SK-N-SH (cell line): ENCODE measurements at regions of chr14 and their contacts with region 1.

Region 1: DNA sequence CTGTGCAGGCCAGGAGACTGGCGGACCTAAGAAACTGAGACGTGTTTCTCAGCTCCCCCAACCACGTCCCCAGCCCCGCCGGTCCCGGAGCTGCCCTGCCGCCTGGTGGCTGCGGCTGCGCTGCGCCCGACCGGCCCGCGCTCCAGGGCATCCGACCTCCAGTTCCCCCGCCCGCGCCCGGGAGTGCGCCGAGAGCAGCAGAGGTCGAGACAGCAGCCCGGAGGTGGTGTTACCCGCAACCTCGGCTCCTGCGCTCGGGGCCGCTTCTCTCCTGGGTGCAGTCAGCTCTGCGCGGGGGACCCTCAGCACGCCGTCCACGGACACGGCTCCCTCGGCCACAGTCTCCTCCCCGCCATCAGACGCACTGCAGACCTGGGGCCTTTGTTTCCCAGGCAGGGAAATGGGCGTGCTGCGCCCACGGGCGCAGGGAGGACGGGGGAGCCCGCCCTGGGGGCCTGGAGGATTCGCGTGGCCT is 21.6 kb upstream of the GPR132 start:
- DNase-seq: peak; percentile 90
- H3K4me3 ChIP-seq: peak overlapping the region; percentile 37 to 38; a peak in 3 of 4 replicates
- H3K27ac ChIP-seq: no peak overlapping the region
- H3K4me1 ChIP-seq: peaks cover 1 to 29% of the 10 kb centered on the region in 2 experiments; a peak in 2 of 4 replicates
- H3K27me3 ChIP-seq: no peaks in the 10 kb centered on the region
- CTCF ChIP-seq: peak; percentile 69
- EP300 ChIP-seq: no peak
- RAD21 ChIP-seq: peak; percentile 58

Region 2: GRCh38 chr14:104749111-104749649 is 337.7 kb before region 1 on chr14:
- CTCF ChIA-PET with region 1: no interaction called
- POLR2A ChIA-PET with region 1: no interaction called
- DNase-seq: no peak
- H3K4me3 ChIP-seq: no peak overlapping the region
- H3K27ac ChIP-seq: no peak overlapping the region
- H3K4me1 ChIP-seq: peaks cover 1 to 9% of the 10 kb centered on the region in 2 experiments; a peak in 2 of 4 replicates
- H3K27me3 ChIP-seq: no peaks in the 10 kb centered on the region
- CTCF ChIP-seq: no peak
- EP300 ChIP-seq: no peak
- RAD21 ChIP-seq: no peak

Region 3: DNA sequence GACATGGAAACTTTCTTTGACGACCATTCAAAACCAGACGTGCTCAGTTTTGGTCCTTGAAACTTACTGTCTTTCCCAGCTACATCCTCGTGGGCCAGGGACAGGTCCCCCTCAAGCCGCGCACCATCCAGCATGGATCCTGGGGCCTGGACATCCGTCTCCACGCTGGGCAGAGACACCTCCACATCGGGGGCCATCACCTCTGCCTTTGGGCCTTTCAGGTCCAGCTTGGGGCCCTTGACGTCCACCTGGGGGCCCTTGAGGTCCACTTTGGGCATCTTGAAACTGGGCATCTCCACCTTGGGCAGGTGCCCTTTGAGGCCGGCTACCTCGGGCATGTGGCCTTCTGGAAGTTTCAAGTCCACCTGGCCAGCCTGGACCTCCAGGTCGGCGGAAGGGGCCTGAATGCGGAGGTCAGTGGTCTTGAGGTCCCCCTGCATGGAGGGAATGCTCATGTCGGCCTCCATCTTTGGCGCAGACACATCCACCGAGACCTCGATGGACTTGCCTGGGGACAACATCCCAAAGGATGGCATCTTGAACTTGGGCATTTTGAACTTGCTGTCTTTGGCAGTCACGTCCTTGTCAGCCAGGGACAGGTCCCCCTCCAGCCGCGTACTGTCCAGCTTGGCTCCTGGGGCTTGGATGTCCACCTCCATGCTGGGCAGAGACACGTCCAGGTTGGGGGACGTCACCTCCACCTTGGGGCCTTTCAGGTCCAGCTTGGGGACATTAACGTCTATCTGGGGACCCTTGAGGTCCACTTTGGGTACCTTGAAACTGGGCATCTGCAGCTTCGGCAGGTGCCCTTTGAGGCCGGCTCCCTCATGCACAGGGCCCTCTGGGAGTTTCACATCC is 145.1 kb before region 1 on chr14:
- CTCF ChIA-PET with region 1: no interaction called
- POLR2A ChIA-PET with region 1: no interaction called
- DNase-seq: no peak
- H3K4me3 ChIP-seq: no peak overlapping the region
- H3K27ac ChIP-seq: no peak overlapping the region
- H3K4me1 ChIP-seq: no peaks in the 10 kb centered on the region
- H3K27me3 ChIP-seq: no peaks in the 10 kb centered on the region
- CTCF ChIP-seq: no peak
- EP300 ChIP-seq: no peak
- RAD21 ChIP-seq: no peak

Region 4: GRCh38 chr14:105065280-105066228 is 21.3 kb before region 1 on chr14 and contains the start of gene GPR132:
- CTCF ChIA-PET with region 1: interaction called, 36 read pairs
- POLR2A ChIA-PET with region 1: no interaction called
- DNase-seq: no peak
- H3K4me3 ChIP-seq: no peak within 1 kb of the TSS
- H3K27ac ChIP-seq: no peak within 1 kb of the TSS
- H3K4me1 ChIP-seq: no peaks in the 10 kb centered on the region; a peak in 1 of 4 replicates
- H3K27me3 ChIP-seq: no peaks in the 10 kb centered on the region
- CTCF ChIP-seq: no peak
- EP300 ChIP-seq: no peak
- RAD21 ChIP-seq: no peak
- polyA plus RNA-seq, gene GPR132: 0.03 TPM in 1 of 2 replicates, not detected in the other

Region 5: GRCh38 chr14:105075379-105076295 is 11.2 kb before region 1 on chr14:
- CTCF ChIA-PET with region 1: interaction called, 36 read pairs
- POLR2A ChIA-PET with region 1: no interaction called
- DNase-seq: peak; percentile 73
- H3K4me3 ChIP-seq: no peak overlapping the region
- H3K27ac ChIP-seq: no peak overlapping the region
- H3K4me1 ChIP-seq: peaks cover 0 to 8% of the 10 kb centered on the region in 2 experiments; a peak in 1 of 4 replicates
- H3K27me3 ChIP-seq: no peaks in the 10 kb centered on the region
- CTCF ChIP-seq: no peak
- EP300 ChIP-seq: no peak
- RAD21 ChIP-seq: no peak

Region 6: DNA sequence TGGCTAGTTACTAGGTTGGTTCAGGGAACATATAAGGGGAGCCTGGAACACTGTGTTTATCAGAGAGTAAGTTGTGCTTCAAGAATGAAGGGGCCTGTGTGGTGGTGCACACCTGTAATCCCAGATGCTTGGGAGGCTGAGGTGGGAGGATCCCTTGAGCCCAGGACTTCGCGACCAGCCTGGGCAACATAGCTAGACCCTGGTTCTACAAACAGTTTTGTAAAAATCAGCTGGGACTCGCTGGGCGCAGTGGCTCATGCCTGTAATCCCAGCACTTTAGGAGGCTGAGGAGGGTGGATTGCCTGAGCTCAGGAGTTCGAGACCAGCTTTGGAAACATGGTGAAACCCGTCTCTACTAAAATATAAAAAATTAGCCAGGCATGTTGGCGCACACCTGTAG is 20.5 kb after region 1 on chr14:
- CTCF ChIA-PET with region 1: interaction called, 14 read pairs
- POLR2A ChIA-PET with region 1: no interaction called
- DNase-seq: no peak
- H3K4me3 ChIP-seq: no peak overlapping the region
- H3K27ac ChIP-seq: no peak overlapping the region
- H3K4me1 ChIP-seq: no peaks in the 10 kb centered on the region
- H3K27me3 ChIP-seq: peaks cover 23% of the 10 kb centered on the region
- CTCF ChIP-seq: no peak
- EP300 ChIP-seq: no peak
- RAD21 ChIP-seq: no peak

Region 7: GRCh38 chr14:105135700-105136395 is 49.0 kb after region 1 on chr14:
- CTCF ChIA-PET with region 1: no interaction called
- POLR2A ChIA-PET with region 1: no interaction called
- DNase-seq: no peak
- H3K4me3 ChIP-seq: no peak overlapping the region
- H3K27ac ChIP-seq: no peak overlapping the region
- H3K4me1 ChIP-seq: no peaks in the 10 kb centered on the region
- H3K27me3 ChIP-seq: no peaks in the 10 kb centered on the region
- CTCF ChIP-seq: no peak
- EP300 ChIP-seq: no peak
- RAD21 ChIP-seq: no peak

Region 8: GRCh38 chr14:105203057-105203531 is 116.2 kb after region 1 on chr14:
- CTCF ChIA-PET with region 1: interaction called, 10 read pairs
- POLR2A ChIA-PET with region 1: no interaction called
- DNase-seq: peak; percentile 93
- H3K4me3 ChIP-seq: peak overlapping the region in 1 of 2 experiments; percentile 14; a peak in 1 of 4 replicates
- H3K27ac ChIP-seq: peak overlapping the region in 1 of 2 experiments; percentile 50; a peak in 1 of 4 replicates
- H3K4me1 ChIP-seq: peaks cover 0 to 69% of the 10 kb centered on the region in 2 experiments; a peak in 1 of 4 replicates
- H3K27me3 ChIP-seq: no peaks in the 10 kb centered on the region
- CTCF ChIP-seq: peak; percentile 91
- EP300 ChIP-seq: no peak
- RAD21 ChIP-seq: peak; percentile 74

Region 9: GRCh38 chr14:105294142-105294597 is 207.3 kb after region 1 on chr14:
- CTCF ChIA-PET with region 1: interaction called, 10 read pairs
- POLR2A ChIA-PET with region 1: no interaction called
- DNase-seq: peak; percentile 91
- H3K4me3 ChIP-seq: no peak overlapping the region
- H3K27ac ChIP-seq: peak overlapping the region; percentile 41 to 98; a peak in 3 of 4 replicates
- H3K4me1 ChIP-seq: peaks cover 0 to 44% of the 10 kb centered on the region in 2 experiments; a peak in 3 of 4 replicates
- H3K27me3 ChIP-seq: no peaks in the 10 kb centered on the region
- CTCF ChIP-seq: no peak
- EP300 ChIP-seq: peak in 1 of 2 experiments; percentile 82; a peak in 2 of 4 replicates
- RAD21 ChIP-seq: peak; percentile 26; the same call in 1 of the 2 replicates

Region 10: GRCh38 chr14:105351920-105352851 is 265.3 kb after region 1 on chr14:
- CTCF ChIA-PET with region 1: interaction called, 10 read pairs
- POLR2A ChIA-PET with region 1: no interaction called
- DNase-seq: peak; percentile 95
- H3K4me3 ChIP-seq: no peak overlapping the region; a peak in 1 of 4 replicates
- H3K27ac ChIP-seq: peak overlapping the region in 1 of 2 experiments; percentile 44; a peak in 1 of 4 replicates
- H3K4me1 ChIP-seq: peaks cover 0 to 6% of the 10 kb centered on the region in 2 experiments; a peak in 1 of 4 replicates
- H3K27me3 ChIP-seq: no peaks in the 10 kb centered on the region
- CTCF ChIP-seq: peak; percentile 83
- EP300 ChIP-seq: no peak
- RAD21 ChIP-seq: peak; percentile 97

Region 11: DNA sequence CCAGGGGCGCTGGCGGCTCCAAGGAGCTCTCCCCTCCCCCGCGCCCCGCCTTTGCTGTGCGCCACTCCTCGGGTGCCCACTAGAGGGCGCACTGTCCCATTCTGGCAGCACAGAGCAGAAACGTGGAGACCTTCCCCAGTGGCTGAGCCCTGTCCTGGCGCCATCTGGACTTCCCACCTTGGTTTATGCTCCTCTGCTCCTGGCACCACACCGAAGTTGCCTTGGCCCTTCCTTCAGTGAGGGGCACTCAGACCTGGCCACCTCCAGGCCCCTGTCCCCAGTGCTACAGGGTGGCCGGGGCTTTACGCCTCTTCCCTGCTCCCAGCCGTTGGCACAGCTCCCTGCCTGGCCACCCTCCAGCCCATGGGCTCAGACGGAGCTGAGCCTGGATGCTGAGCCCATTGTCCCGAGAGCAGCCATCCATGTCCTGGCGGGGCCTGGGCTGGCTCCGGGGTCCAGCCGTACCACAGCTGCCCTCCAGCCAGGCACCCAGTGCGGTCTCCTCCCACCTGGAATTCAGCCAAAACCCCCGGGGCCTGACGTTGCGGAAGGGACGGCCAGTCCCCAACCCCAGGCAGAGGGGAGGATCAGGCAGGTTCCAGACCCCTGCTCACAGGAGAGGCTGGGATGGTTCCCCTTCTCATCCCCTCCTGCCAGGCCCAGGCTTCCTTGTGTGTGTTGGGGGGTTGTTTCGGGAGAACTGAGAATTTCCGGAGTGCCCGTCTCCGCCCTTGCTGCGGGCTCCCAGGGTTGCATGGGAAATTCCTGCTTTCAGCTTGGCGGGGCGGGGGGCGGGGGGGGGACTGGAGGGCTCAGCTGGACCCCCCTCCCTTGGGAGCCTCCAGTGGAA is 394.3 kb after region 1 on chr14:
- CTCF ChIA-PET with region 1: no interaction called
- POLR2A ChIA-PET with region 1: no interaction called
- DNase-seq: peak; percentile 92
- H3K4me3 ChIP-seq: peak overlapping the region; percentile 39 to 56
- H3K27ac ChIP-seq: peak overlapping the region; percentile 98 to 100
- H3K4me1 ChIP-seq: peaks cover 43 to 80% of the 10 kb centered on the region in 2 experiments; a peak in 3 of 4 replicates
- H3K27me3 ChIP-seq: no peaks in the 10 kb centered on the region
- CTCF ChIP-seq: peak; percentile 96
- EP300 ChIP-seq: peak in 1 of 2 experiments; percentile 16; a peak in 1 of 4 replicates
- RAD21 ChIP-seq: peak; percentile 67